Activated B cell treated with CpG ODN at 0.5 μM for 24 hours (primary cell): ENCODE measurements at regions of chr17 and their contacts with region 1.

Region 1: DNA sequence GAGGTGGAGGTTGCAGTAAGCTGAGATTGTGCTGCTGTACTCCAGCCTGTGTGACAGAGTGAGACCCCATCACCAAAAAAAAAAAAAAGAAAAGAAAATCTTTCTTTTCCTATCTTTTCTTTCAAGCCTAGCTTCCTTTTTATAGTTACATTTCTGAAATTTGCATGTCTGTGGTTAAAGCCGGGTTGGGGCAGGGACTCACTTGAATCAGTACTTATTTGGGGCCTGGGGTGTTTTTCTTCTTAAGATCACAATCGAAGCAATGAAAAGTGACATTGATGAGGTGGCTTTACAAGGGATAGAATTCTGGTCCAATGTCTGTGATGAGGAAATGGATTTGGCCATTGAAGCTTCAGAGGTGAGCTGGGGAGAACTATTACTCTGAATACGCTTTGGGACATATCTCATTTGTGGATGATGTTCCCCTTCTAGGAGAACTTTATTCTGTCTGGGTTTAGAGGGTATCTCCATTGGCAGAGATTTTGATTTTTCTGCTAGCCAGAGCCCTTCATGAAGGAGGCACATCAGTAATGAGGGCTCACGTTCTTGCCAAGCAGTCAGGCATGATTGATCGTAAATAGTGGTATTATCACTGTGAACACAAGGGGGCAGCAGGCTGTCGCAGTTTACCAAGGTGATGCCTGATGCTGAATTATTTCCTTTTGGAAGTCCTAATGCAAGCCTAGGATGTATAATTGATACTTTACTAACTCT is 14.3 kb downstream of the KPNB1 start:
- DNase-seq: no peak
- ATAC-seq: peak; percentile 74
- H3K4me3 Mint-ChIP-seq: peak overlapping the region; percentile 73
- H3K27ac Mint-ChIP-seq: peak overlapping the region; percentile 90
- H3K4me1 Mint-ChIP-seq: peaks cover 36% of the 10 kb centered on the region
- H3K27me3 Mint-ChIP-seq: no peaks in the 10 kb centered on the region
- CTCF ChIP-seq: peak; percentile 70

Region 2: DNA sequence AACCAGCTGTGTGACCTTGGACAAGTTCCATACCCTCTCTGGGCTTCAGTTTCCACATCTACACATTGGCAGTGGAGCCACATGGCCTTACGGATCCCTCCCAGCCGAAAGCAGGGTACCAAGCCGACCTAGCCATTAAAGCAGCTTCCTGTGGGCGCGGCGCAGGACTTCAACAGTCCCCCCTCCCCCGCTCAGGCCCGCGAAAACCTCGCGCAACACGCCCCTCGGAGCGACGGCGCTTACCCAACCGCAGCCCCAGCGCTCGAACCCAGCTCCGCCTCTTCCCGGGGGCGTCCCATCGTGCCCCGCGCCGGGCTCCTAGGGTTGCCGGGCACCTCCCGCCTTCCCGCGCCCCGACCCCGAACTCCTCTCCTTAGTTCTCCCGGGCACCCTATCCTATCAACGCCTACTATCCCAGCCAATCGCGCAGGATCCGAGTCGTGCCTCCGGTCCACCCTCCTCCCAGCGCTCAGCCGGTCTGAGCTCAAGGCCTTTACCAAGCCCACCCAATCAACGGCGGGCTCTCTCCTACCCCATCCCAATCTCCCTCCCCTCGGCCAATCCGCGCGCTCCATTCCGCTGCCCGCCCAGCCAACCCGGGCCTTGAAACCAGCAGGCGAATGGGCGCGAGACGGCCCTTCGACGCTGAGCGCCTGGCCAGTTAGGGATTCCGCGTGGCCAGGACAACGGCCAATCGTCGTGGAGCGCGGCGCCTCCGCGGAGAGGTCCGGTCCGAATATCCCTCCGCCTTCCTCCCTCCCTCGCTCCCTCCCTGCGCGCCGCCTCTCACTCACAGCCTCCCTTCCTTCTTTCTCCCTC is 14.7 kb before region 1 on chr17 and contains the start of gene KPNB1:
- CTCF ChIA-PET with region 1: interaction called, 12 read pairs
- POLR2A ChIA-PET with region 1: interaction called, 84 read pairs
- intact Hi-C with region 1: loop called (anchors 1 kb)
- DNase-seq: peak; percentile 92
- ATAC-seq: peak; percentile 80
- H3K4me3 Mint-ChIP-seq: peak within 1 kb of the TSS; percentile 99
- H3K27ac Mint-ChIP-seq: peak within 1 kb of the TSS; percentile 99
- H3K4me1 Mint-ChIP-seq: peaks cover 53% of the 10 kb centered on the region
- H3K27me3 Mint-ChIP-seq: no peaks in the 10 kb centered on the region
- CTCF ChIP-seq: no peak
- total RNA-seq, gene KPNB1: 361 and 365 TPM in 2 replicates

Region 3: GRCh38 chr17:47675380-47676198 is 11.5 kb after region 1 on chr17:
- CTCF ChIA-PET with region 1: interaction called, 13 read pairs
- POLR2A ChIA-PET with region 1: interaction called, 5 read pairs
- intact Hi-C with region 1: no loop called
- DNase-seq: no peak
- ATAC-seq: no peak
- H3K4me3 Mint-ChIP-seq: no peak overlapping the region
- H3K27ac Mint-ChIP-seq: peak overlapping the region; percentile 41
- H3K4me1 Mint-ChIP-seq: peaks cover 5% of the 10 kb centered on the region
- H3K27me3 Mint-ChIP-seq: no peaks in the 10 kb centered on the region
- CTCF ChIP-seq: no peak

Region 4: DNA sequence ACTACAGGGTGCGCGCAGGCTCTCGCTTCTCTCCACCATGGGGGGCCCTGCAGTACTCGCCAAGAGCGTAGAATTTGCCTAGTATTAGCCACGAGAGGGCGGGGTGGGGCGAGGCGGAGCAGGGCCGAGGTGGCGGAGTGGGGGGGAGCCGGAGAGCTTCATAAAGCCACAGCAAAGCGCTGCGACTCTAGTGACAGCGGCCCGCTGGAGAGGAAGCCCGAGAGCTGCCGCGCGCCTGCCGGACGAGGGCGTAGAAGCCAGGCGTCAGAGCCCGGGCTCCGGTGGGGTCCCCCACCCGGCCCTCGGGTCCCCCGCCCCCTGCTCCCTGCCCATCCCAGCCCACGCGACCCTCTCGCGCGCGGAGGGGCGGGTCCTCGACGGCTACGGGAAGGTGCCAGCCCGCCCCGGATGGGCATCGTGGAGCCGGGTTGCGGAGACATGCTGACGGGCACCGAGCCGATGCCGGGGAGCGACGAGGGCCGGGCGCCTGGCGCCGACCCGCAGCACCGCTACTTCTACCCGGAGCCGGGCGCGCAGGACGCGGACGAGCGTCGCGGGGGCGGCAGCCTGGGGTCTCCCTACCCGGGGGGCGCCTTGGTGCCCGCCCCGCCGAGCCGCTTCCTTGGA is 69.1 kb after region 1 on chr17 and contains the start of gene TBX21:
- CTCF ChIA-PET with region 1: interaction called, 4 read pairs
- POLR2A ChIA-PET with region 1: interaction called, 8 read pairs
- intact Hi-C with region 1: loop called (anchors 1 kb)
- DNase-seq: peak; percentile 79
- ATAC-seq: peak; percentile 91
- H3K4me3 Mint-ChIP-seq: peak within 1 kb of the TSS; percentile 94
- H3K27ac Mint-ChIP-seq: peak within 1 kb of the TSS; percentile 87
- H3K4me1 Mint-ChIP-seq: peaks cover 52% of the 10 kb centered on the region
- H3K27me3 Mint-ChIP-seq: peaks cover 2% of the 10 kb centered on the region
- CTCF ChIP-seq: peak; percentile 43
- total RNA-seq, gene TBX21: 3.6 and 3.8 TPM in 2 replicates

Region 5: DNA sequence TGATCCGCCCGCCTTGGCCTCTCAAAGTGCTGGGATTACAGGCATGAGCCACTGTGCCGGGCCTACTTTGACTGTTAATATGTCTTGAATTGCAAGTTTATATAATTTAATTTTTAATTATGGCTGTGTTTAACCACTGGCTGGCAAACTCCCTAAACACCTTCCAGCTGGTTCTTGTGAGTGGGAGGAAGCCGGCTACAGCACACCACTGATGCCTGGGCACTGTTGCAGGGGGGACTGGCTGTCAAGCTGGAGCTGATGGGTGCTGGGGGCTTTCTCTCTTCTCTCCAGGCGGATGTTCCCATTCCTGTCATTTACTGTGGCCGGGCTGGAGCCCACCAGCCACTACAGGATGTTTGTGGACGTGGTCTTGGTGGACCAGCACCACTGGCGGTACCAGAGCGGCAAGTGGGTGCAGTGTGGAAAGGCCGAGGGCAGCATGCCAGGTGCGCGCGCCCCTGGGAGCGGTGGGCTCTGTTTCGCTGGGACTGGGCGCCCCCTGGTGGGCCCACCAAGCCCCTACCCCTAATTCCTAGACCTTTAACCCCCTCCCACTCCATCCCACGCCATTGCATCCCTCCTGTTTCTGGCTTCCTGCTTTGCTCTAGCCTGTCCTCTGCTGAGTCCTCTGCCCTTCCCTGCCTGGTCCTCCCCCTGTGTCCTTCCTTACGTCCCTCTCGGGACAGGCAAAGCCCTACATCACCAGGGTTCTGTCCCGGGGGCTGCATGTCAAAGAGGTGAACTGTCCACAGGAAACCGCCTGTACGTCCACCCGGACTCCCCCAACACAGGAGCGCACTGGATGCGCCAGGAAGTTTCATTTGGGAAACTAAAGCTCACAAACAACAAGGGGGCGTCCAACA is 78.5 kb after region 1 on chr17:
- CTCF ChIA-PET with region 1: interaction called, 24 read pairs
- POLR2A ChIA-PET with region 1: interaction called, 5 read pairs
- intact Hi-C with region 1: loop called (anchors 1 kb)
- DNase-seq: peak; percentile 53
- ATAC-seq: peak; percentile 90
- H3K4me3 Mint-ChIP-seq: no peak overlapping the region
- H3K27ac Mint-ChIP-seq: no peak overlapping the region
- H3K4me1 Mint-ChIP-seq: peaks cover 25% of the 10 kb centered on the region
- H3K27me3 Mint-ChIP-seq: no peaks in the 10 kb centered on the region
- CTCF ChIP-seq: no peak

Region 6: DNA sequence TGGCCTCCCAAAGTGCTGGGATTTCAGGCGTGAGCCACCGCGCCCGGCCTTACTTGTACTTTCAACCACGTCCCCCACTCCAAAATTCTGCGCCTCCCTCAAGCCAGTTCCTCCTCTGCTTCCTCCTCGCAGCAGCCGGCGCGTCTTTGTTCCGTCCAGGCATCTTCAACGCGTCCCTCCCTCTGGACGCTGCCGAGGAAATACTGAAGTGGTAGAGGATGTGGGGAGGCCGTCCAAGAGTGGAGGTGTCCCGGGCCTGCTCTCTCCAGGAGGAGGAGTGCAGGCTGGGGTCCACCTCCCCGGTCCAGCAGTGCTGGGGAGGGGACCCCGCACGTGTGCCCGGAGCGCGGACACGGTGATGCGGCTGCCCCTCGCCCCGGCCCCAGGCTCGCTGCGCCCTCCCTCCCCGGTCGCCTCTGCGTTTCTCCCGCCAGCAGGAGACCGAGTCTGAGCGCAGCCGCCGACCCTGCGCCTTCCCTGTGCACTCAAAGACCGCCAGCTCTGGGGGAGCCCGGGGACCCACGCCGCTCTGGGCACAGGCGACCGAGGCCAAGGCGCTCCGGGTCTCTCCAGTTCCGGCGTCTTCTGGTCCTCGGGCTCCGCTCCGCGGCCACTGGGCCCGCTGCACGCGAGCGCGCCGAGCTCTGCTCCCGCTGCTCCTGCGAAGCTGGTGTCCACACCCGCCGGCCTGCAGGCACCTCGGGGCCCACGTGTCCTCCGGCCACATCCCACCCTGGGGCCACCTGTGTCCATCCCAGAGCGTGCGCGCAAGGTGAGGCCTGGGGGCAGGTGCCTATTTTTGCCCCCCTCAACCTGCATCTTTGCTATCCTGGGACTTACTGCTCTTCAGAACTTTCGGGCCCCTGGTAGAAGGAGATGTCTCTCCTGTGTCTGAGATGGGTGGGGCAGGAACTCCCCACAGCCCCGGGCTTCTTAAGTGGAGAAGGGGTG is 125.8 kb after region 1 on chr17:
- CTCF ChIA-PET with region 1: interaction called, 3 read pairs
- POLR2A ChIA-PET with region 1: no interaction called
- intact Hi-C with region 1: loop called (anchors 1 kb)
- DNase-seq: peak; percentile 48
- ATAC-seq: peak; percentile 80
- H3K4me3 Mint-ChIP-seq: peak overlapping the region; percentile 74
- H3K27ac Mint-ChIP-seq: no peak overlapping the region
- H3K4me1 Mint-ChIP-seq: peaks cover 9% of the 10 kb centered on the region
- H3K27me3 Mint-ChIP-seq: peaks cover 54% of the 10 kb centered on the region
- CTCF ChIP-seq: no peak

Region 7: GRCh38 chr17:47802341-47803022 is 138.4 kb after region 1 on chr17:
- CTCF ChIA-PET with region 1: interaction called, 10 read pairs
- POLR2A ChIA-PET with region 1: no interaction called
- intact Hi-C with region 1: loop called (anchors 1 kb)
- DNase-seq: peak; percentile 32
- ATAC-seq: peak; percentile 83
- H3K4me3 Mint-ChIP-seq: no peak overlapping the region
- H3K27ac Mint-ChIP-seq: no peak overlapping the region
- H3K4me1 Mint-ChIP-seq: no peaks in the 10 kb centered on the region
- H3K27me3 Mint-ChIP-seq: peaks cover 4% of the 10 kb centered on the region
- CTCF ChIP-seq: no peak